ENCODE measurements at regions of chr17 and their contacts with region 1.

Region 1: DNA sequence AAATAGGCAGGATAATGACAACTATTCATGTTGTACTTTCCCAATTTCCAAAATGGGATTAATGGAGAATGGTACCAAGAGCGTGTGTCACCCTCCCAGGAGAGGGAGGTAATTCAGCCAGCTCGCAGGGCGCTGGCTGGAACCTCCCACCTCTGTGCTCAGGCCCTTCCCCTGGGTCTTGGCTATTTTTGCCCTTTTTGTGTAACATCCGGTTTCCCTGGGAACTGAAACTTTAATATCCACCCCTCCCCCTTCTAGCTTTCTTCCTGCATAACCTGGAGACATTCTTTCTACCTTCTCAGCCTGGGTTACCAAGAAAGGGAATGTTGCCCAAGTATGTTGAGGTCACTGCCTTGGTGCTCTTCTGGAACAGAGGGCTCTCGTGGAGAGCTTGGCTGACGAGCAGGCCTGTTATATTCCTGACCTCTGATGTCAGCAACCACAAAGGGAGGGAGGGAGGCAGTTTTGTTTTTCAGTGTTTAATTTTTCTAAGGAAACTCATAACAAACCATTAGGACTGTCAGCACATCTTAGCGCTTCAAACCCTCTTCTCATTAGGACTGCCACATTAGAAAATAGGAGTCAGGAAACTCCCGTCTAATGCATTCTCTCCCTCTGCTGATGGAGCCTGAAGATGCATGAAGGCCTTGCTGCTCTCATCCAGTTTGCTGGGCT is 25.6 kb downstream of the ITGB3 start:
- DNase-seq: peak; percentile 99
- H3K4me3 ChIP-seq: no peak overlapping the region
- H3K27ac ChIP-seq: peak overlapping the region; percentile 56
- H3K4me1 ChIP-seq: peaks cover 53% of the 10 kb centered on the region
- H3K27me3 ChIP-seq: no peaks in the 10 kb centered on the region
- CTCF ChIP-seq: no peak

Region 2: DNA sequence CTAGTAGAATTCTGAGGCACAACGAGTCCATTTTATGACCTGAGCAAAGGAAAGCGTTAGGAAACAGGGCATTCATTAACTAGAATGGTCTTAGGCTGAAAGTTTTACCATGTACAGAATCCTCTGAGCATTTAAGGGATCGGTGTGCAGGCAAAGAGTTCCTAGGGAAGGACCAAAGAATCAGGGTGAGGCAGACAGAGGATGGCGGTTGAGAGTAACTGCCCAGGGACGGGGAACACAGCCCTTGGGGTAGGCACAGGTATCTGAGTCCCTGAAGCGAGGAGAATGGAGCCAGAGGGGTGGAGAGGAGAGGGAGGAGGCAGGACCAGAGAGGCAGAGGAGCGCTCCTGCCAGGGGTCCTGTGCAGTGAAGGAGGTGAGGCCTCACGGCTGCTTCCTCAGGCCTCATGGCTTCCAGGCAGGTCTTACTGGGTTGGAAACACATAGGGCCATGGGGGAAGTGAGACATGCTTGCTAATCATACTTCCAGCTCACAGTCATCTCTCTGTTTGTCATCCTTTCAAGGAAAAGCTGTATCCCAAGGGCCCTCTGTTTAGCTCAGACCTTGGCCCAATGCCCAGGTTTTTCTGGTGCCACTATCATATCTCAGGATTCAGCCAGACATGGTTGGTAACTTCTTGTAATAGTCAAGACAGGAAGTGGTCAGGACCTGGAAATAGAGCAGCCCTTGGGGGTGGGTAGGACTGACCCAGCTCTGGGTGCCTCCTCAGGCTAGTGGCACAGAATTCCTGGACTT is 39.4 kb before region 1 on chr17:
- CTCF ChIA-PET with region 1: interaction called, 8 read pairs
- dilution Hi-C with region 1: no loop called
- in situ Hi-C with region 1: no loop called
- intact Hi-C with region 1: loop called (anchors 2 kb)
- DNase-seq: peak; percentile 96
- H3K4me3 ChIP-seq: no peak overlapping the region
- H3K27ac ChIP-seq: peak overlapping the region; percentile 6
- H3K4me1 ChIP-seq: peaks cover 16% of the 10 kb centered on the region
- H3K27me3 ChIP-seq: no peaks in the 10 kb centered on the region
- CTCF ChIP-seq: no peak

Region 3: DNA sequence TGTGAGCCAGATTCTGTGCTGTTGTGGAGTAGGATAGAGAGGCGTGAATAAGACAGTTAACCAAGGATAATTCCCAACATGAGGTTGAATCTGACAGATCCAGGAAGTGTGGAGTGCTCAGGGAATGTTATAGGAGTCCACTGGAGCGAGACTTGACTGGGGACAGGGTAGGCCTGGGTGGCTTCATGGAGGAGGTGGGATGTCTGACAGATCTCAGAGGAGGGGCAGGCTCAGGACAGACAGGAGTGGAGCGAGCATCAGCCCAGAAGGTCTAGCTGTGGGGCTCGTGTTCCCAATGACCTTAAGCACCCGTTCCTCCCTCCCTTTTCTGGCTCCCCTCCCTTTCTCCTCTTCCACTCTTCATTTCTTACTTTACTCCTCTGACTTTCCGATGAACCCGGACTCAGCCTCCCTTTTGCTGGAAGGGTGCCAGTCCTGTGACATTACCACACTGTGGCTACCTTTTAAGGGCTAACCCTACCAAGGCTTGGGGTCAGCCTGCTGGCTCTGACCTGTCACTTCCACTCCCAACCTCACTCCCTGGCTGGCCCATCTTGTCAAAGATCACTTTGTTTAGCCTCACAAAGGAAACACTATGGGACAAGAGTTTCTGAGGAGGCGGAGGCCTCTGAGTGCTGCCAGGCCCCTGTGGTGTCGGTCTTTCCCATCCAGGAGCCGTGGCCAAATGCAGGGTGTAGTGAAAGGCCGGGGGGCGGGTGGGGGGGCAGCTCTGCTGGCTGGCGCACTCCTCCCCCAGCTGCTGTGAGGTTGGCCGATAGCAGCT is 16.1 kb after region 1 on chr17:
- CTCF ChIA-PET with region 1: interaction called, 9 read pairs
- dilution Hi-C with region 1: no loop called
- in situ Hi-C with region 1: no loop called
- intact Hi-C with region 1: loop called (anchors 2 kb)
- DNase-seq: no peak
- H3K4me3 ChIP-seq: no peak overlapping the region
- H3K27ac ChIP-seq: no peak overlapping the region
- H3K4me1 ChIP-seq: peaks cover 13% of the 10 kb centered on the region
- H3K27me3 ChIP-seq: no peaks in the 10 kb centered on the region
- CTCF ChIP-seq: no peak

Measured in mammary epithelial cell (primary cell).